Activated CD4-positive, alpha-beta memory T cell treated with anti-CD3 and anti-CD28 coated beads for 36 hours (primary cell): ENCODE measurements at regions of chr14 and their contacts with region 1.

Region 1: DNA sequence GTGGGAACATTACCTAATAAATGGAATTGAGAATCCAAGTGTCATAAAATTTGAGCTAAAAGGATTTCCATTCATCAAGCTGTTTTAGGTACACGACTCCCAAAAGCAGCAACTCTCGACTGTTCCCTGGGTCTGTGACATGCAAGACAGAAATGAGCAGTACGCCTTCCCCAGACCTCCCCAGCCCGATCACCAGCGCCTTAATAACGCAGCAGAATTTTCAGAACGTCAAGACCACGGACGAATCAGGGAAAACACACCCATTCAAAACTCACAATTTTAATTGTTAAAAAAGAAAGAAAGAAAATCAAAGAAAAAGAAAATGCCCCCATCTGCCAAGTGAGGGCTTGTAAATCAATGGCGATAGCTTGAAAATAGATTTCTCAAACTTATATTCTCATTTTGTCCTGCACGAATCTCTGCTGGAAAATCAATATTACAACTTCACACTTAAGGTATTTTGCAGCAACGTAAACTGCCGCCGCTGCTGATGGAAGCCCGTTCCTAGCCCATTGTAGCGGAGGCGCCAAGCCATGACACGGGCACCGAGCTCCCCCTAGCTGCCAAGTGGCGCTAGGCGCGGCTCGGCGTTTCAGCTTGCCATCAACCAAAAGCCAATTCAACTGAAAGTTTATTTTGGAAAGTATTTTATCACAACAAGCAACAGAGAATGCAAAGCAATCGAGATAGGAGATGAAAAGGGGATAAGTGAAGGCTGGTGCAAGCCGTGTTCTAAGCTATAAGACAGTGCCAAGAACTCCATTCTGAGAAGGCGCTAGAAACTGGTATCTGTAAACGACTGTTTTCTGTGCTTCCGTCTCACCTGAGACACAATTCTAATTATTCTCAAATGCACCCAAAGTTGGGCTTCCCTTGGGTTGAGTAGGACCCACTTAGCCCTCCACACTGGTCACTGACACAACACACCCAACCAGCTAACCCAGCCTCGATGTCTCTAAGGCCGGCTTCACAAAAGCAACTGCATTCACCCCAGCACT is 5.5 kb downstream of the BCL11B start:
- DNase-seq: peak; percentile 93
- H3K4me3 Mint-ChIP-seq: peak overlapping the region; percentile 96
- H3K27ac Mint-ChIP-seq: peak overlapping the region; percentile 100
- H3K4me1 Mint-ChIP-seq: peaks cover 52% of the 10 kb centered on the region
- H3K27me3 Mint-ChIP-seq: peaks cover under 1% of the 10 kb centered on the region

Region 2: DNA sequence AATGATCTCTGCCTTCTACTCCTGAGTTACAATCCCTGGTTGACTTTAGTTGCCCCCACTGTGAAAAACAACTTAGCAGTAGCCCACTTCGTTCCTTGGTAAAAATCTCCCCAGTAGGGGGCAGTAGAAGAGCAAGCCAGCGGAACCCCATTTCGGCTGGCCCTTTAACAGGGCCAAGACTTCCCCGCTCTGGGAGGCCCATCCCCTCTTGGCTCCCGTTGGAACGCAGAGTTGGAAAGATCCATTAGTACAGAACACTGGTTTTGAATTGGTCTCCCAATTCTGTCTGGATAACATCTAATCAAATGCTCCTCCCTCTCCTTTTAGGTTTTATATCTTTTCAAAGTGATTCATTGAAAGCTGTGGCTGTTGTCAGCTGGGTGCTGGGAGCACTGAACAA is 1127.8 kb before region 1 on chr14:
- CTCF ChIA-PET with region 1: interaction called, 29 read pairs
- POLR2A ChIA-PET with region 1: interaction called, 6 read pairs
- intact Hi-C with region 1: loop called (anchors 2 kb)
- DNase-seq: peak; percentile 73
- H3K4me3 Mint-ChIP-seq: peak overlapping the region; percentile 42
- H3K27ac Mint-ChIP-seq: peak overlapping the region; percentile 80
- H3K4me1 Mint-ChIP-seq: peaks cover 76% of the 10 kb centered on the region
- H3K27me3 Mint-ChIP-seq: no peaks in the 10 kb centered on the region

Region 3: GRCh38 chr14:98931911-98932310 is 334.6 kb before region 1 on chr14:
- CTCF ChIA-PET with region 1: interaction called, 3 read pairs
- POLR2A ChIA-PET with region 1: no interaction called
- intact Hi-C with region 1: loop called (anchors 5 kb)
- DNase-seq: peak; percentile 81
- H3K4me3 Mint-ChIP-seq: peak overlapping the region; percentile 49
- H3K27ac Mint-ChIP-seq: peak overlapping the region; percentile 71
- H3K4me1 Mint-ChIP-seq: peaks cover 58% of the 10 kb centered on the region
- H3K27me3 Mint-ChIP-seq: no peaks in the 10 kb centered on the region

Region 4: GRCh38 chr14:99201351-99202073 is 65.0 kb before region 1 on chr14:
- CTCF ChIA-PET with region 1: interaction called, 130 read pairs
- POLR2A ChIA-PET with region 1: interaction called, 6 read pairs
- intact Hi-C with region 1: no loop called
- DNase-seq: no peak
- H3K4me3 Mint-ChIP-seq: peak overlapping the region; percentile 39
- H3K27ac Mint-ChIP-seq: peak overlapping the region; percentile 91
- H3K4me1 Mint-ChIP-seq: peaks cover 100% of the 10 kb centered on the region
- H3K27me3 Mint-ChIP-seq: no peaks in the 10 kb centered on the region

Region 5: GRCh38 chr14:99245564-99246511 is 20.6 kb before region 1 on chr14:
- CTCF ChIA-PET with region 1: interaction called, 44 read pairs
- POLR2A ChIA-PET with region 1: interaction called, 425 read pairs
- intact Hi-C with region 1: loop called (anchors 1 kb)
- DNase-seq: no peak
- H3K4me3 Mint-ChIP-seq: peak overlapping the region; percentile 75
- H3K27ac Mint-ChIP-seq: peak overlapping the region; percentile 96
- H3K4me1 Mint-ChIP-seq: peaks cover 74% of the 10 kb centered on the region
- H3K27me3 Mint-ChIP-seq: no peaks in the 10 kb centered on the region

Region 6: DNA sequence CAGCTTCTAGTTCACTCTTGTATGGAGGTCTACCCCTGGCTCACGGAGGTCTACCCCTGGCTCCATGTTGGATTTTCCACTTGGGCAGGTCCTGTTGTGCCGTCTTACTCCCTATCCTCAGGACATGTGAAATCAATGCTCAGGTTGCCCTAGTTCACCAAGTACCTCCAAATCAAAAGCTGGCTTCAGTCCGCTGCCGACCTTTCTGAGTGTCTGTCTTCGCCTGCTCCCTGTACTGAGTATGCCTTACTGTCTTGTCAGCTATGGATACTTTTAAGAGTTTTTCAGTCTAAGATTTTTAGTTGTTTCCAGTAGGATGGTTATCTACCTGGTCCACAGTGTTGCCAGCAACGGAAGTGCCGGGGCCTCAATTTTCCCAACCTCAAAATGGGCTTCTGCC is 45.6 kb after region 1 on chr14:
- CTCF ChIA-PET with region 1: no interaction called
- POLR2A ChIA-PET with region 1: no interaction called
- intact Hi-C with region 1: no loop called
- DNase-seq: no peak
- H3K4me3 Mint-ChIP-seq: no peak overlapping the region
- H3K27ac Mint-ChIP-seq: no peak overlapping the region
- H3K4me1 Mint-ChIP-seq: no peaks in the 10 kb centered on the region
- H3K27me3 Mint-ChIP-seq: no peaks in the 10 kb centered on the region